Gastrocnemius medialis (tissue), 4 donors: ENCODE measurements at regions of chr1 and their contacts with region 1.

Region 1: DNA sequence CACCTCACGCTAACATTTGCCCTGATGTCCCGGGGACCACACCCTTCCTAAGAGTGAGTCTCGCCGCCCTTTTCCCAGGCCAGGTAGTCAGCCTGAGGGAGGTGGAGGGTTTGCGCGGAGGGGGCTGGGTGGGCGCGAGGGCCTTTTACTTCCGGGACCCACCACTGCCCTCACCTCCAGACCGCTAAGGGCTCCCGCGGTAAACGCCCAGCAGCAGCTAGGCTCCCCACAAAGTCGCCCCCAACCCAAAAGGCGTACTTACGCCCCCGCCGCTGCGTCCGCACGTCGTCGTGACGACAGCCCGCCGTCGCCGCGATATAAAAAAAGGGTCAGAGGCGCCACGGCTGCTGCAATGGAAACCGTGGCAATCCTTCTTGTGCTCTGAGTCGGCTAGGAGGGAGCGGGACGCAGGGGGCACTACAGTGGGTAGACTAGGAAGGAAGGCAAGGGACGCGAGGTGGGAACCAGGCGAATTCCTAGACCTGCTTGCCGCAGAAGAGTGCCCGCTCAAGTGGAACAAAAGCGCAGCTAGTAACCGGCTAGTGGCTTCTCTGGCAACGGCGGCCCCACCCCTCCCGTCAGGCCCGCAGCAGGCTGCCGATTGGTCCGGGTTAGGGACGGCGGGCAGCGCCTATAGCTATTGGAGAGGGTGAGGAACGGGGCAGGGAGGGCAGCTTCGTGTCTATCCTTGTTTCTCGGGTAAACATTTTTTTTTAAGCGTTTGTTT is at the start of gene ODF2L:
- DNase-seq: peak; percentile 85
- ATAC-seq: peak; percentile 95 to 98
- H3K4me3 ChIP-seq: peak within 1 kb of the TSS; percentile 74 to 96 (median 86)
- H3K27ac ChIP-seq: peak within 1 kb of the TSS; percentile 64 to 73 (median 72)
- H3K4me1 ChIP-seq: peaks cover 0 to 6% of the 10 kb centered on the region in 2 donors
- H3K27me3 ChIP-seq: no peaks in the 10 kb centered on the region
- CTCF ChIP-seq: no peak
- POLR2A ChIP-seq: peak in 1 of 2 donors; percentile 66
- total RNA-seq, gene ODF2L: 1.7 to 5.4 (median 2.4) TPM

Region 2: GRCh38 chr1:86515597-86515996 is 119.7 kb after region 1 on chr1:
- in situ Hi-C with region 1: no loop called
- intact Hi-C with region 1: no loop called
- DNase-seq: no peak
- ATAC-seq: no peak
- H3K4me3 ChIP-seq: no peak overlapping the region
- H3K27ac ChIP-seq: no peak overlapping the region
- H3K4me1 ChIP-seq: no peaks in the 10 kb centered on the region
- H3K27me3 ChIP-seq: no peaks in the 10 kb centered on the region
- CTCF ChIP-seq: peak in 1 of 5 experiments; percentile 37
- POLR2A ChIP-seq: no peak

Region 3: GRCh38 chr1:86741947-86742572 is 346.1 kb after region 1 on chr1:
- in situ Hi-C with region 1: loop called in 1 of 4 experiments (anchors 25 kb)
- intact Hi-C with region 1: no loop called
- DNase-seq: no peak
- ATAC-seq: peak in 1 of 2 donors; percentile 43
- H3K4me3 ChIP-seq: no peak overlapping the region
- H3K27ac ChIP-seq: no peak overlapping the region
- H3K4me1 ChIP-seq: no peaks in the 10 kb centered on the region
- H3K27me3 ChIP-seq: no peaks in the 10 kb centered on the region
- CTCF ChIP-seq: peak; percentile 56 to 75 (median 65)
- POLR2A ChIP-seq: no peak

Region 4: GRCh38 chr1:87061742-87062156 is 665.8 kb after region 1 on chr1:
- in situ Hi-C with region 1: loop called in 1 of 4 experiments (anchors 25 kb)
- intact Hi-C with region 1: no loop called
- DNase-seq: no peak
- ATAC-seq: no peak
- H3K4me3 ChIP-seq: no peak overlapping the region
- H3K27ac ChIP-seq: no peak overlapping the region
- H3K4me1 ChIP-seq: peaks cover 4 to 8% of the 10 kb centered on the region in 2 donors
- H3K27me3 ChIP-seq: no peaks in the 10 kb centered on the region
- CTCF ChIP-seq: no peak
- POLR2A ChIP-seq: no peak